Endothelial cell of umbilical vein (primary cell): ENCODE measurements at regions of chr3 and their contacts with region 1.

Region 1: DNA sequence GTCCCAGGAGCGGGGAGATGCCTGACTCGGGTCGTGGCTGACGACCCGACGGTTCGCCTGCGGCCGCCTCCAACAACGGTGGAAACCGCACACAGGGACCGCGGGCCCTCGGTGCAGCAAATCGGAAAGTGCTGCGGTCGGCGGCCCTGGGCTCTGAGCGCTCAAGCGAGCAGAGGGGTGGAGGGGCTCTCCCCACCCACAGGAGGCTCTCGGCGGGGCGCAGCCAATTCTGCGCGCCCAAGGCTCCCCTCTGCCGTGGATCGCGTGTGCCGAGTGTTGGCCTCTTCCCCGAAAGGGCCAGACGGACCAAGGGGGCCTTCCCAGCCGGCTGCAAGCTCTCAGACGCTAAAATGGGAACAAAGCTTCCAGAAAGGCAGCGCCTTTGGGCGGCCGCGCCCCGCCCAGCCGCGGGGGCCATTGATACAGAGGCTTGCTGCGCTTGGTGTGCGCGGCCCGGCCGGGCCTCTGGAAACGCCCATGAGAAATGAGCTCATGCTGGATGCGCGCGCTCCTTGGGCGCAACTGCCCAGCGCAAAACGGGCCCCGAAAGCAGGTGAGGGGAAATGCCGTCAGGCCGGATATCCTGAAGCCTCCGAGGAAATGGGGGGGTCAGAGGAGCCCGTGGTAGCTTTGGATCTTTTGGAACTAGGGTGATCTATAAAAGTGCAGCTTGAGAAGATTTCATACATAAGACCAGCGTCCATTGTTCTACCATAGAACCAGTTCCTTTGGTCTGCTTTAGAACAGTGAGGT is 1.2 kb upstream of the GSK3B start:
- DNase-seq: peak; percentile 92
- H3K4me3 ChIP-seq: peak overlapping the region; percentile 35 to 96 (median 78)
- H3K27ac ChIP-seq: peak overlapping the region; percentile 99
- H3K4me1 ChIP-seq: peaks cover 22% of the 10 kb centered on the region
- H3K27me3 ChIP-seq: no peaks in the 10 kb centered on the region
- CTCF ChIP-seq: no peak
- POLR2A ChIP-seq: peak; percentile 97

Region 2: DNA sequence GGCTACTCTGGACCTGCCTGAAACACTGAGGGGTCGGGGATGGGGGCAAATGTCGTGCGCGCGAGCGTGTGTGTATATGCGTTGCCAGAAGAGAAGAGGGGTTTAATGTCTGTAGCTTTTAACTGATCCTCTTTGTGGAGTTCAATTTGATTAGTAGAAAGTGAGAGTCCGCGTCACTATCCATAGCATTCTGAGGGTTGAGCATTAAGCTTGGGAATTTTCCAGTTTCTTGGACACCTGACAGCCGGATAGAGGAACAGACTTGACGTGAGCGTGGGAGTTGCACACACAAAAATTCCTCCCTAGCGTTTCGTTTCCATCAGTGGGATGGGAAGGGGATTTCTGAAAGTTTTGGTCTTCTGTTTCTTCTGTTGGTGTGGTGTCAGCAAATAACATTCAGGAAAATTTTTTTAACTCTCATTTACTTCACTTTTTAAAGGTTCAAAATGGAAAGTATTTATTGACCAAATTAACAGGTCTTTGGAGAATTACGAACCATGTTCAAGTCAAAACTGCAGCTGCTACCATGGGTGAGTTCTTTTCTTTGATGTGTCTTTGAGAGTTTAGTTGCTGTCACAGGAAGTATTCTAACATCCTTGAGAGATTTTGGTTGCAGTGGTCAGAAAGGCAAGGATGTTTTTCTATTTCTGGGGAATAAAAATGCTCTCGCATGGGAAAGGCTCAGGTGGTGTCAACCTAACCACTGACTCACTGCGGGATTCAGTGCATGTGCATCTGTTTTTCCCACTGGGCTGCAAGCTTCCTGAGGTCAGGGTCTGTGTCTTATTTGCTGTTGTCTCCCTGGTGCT is 625.8 kb before region 1 on chr3:
- CTCF ChIA-PET with region 1: no interaction called
- POLR2A ChIA-PET with region 1: no interaction called
- dilution Hi-C with region 1: no loop called
- intact Hi-C with region 1: loop called (anchors 1 kb)
- DNase-seq: peak; percentile 62
- H3K4me3 ChIP-seq: peak overlapping the region; percentile 78 to 86 (median 80)
- H3K27ac ChIP-seq: peak overlapping the region; percentile 19
- H3K4me1 ChIP-seq: peaks cover 13% of the 10 kb centered on the region
- H3K27me3 ChIP-seq: no peaks in the 10 kb centered on the region
- CTCF ChIP-seq: no peak
- POLR2A ChIP-seq: no peak

Region 3: GRCh38 chr3:119769394-119770149 is 325.8 kb before region 1 on chr3:
- CTCF ChIA-PET with region 1: no interaction called
- POLR2A ChIA-PET with region 1: no interaction called
- dilution Hi-C with region 1: no loop called
- intact Hi-C with region 1: loop called (anchors 1 kb)
- DNase-seq: peak; percentile 99
- H3K4me3 ChIP-seq: peak overlapping the region in 1 of 3 experiments; percentile 51
- H3K27ac ChIP-seq: peak overlapping the region; percentile 100
- H3K4me1 ChIP-seq: peaks cover 25% of the 10 kb centered on the region
- H3K27me3 ChIP-seq: no peaks in the 10 kb centered on the region
- CTCF ChIP-seq: no peak
- POLR2A ChIP-seq: peak; percentile 48

Region 4: DNA sequence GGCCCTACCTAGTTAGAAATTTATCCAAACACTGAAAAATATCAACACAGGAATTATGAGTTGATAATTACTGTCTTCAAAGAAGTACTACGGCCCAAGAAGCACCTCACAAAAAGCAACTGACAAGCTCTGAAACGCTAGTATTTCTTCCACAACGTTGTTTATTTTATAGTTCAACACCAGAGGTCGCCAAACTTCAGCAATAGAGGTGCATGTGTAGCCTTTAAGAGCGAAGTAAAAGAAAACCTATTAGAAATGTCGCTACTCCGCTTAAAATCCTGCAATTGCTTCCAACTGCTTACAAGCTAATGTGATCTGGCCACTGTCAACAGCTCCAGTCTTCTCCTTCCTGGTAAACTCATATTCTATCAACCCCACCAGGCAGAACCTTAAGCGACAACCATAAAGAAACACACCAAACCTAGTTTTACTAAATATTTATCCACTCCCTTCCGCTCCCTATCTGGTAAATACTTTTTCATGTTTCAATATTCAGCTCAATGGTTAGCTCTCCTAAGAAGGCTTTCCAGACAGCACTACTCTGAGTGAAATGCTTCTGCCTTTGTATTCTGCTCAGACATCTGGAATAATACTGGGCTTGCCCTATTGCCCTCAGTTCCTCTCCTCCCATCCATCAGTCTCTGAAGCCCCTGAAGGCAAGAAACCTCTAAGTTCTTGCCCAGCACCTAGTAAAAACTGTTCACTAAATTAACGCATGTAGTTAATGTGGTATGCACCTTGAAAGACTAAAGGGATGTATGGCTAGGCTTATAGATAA is 203.3 kb before region 1 on chr3:
- CTCF ChIA-PET with region 1: interaction called, 28 read pairs
- POLR2A ChIA-PET with region 1: interaction called, 8 read pairs
- dilution Hi-C with region 1: no loop called
- intact Hi-C with region 1: loop called (anchors 1 kb)
- DNase-seq: peak; percentile 80
- H3K4me3 ChIP-seq: no peak overlapping the region
- H3K27ac ChIP-seq: no peak overlapping the region
- H3K4me1 ChIP-seq: peaks cover 4% of the 10 kb centered on the region
- H3K27me3 ChIP-seq: no peaks in the 10 kb centered on the region
- CTCF ChIP-seq: peak; percentile 45 to 66
- POLR2A ChIP-seq: no peak

Region 5: GRCh38 chr3:120153091-120153692 is 57.8 kb after region 1 on chr3:
- CTCF ChIA-PET with region 1: interaction called, 3 read pairs
- POLR2A ChIA-PET with region 1: interaction called, 9 read pairs
- dilution Hi-C with region 1: no loop called
- intact Hi-C with region 1: loop called (anchors 2 kb)
- DNase-seq: peak; percentile 60
- H3K4me3 ChIP-seq: no peak overlapping the region
- H3K27ac ChIP-seq: peak overlapping the region; percentile 76
- H3K4me1 ChIP-seq: peaks cover 16% of the 10 kb centered on the region
- H3K27me3 ChIP-seq: no peaks in the 10 kb centered on the region
- CTCF ChIP-seq: no peak
- POLR2A ChIP-seq: no peak

Region 6: GRCh38 chr3:120198305-120198878 is 103.0 kb after region 1 on chr3:
- CTCF ChIA-PET with region 1: interaction called, 3 read pairs
- POLR2A ChIA-PET with region 1: no interaction called
- dilution Hi-C with region 1: no loop called
- intact Hi-C with region 1: loop called (anchors 5 kb)
- DNase-seq: peak; percentile 39
- H3K4me3 ChIP-seq: no peak overlapping the region
- H3K27ac ChIP-seq: no peak overlapping the region
- H3K4me1 ChIP-seq: peaks cover 8% of the 10 kb centered on the region
- H3K27me3 ChIP-seq: no peaks in the 10 kb centered on the region
- CTCF ChIP-seq: peak in 1 of 2 donors; percentile 17
- POLR2A ChIP-seq: no peak

Region 7: DNA sequence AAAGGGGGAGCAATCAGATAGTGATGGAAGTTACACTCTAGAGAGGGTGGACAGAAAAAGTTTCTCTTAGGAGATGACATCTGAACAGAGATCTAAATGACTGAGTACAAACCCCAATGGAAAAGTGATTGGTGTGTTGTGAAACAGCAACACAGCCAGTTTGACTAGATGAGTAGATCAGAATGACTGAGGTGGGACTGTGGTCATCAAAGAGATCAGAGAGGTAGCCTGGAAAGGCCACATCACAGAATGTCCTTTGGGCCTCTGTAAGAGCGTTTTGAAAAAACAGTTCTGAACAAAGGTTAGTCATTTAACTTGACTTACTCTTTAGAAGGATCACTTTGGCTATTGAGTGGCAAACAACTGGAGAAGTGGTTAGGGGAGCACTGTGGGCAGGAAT is 243.1 kb after region 1 on chr3:
- CTCF ChIA-PET with region 1: no interaction called
- POLR2A ChIA-PET with region 1: no interaction called
- dilution Hi-C with region 1: no loop called
- intact Hi-C with region 1: no loop called
- DNase-seq: no peak
- H3K4me3 ChIP-seq: no peak overlapping the region
- H3K27ac ChIP-seq: no peak overlapping the region
- H3K4me1 ChIP-seq: no peaks in the 10 kb centered on the region
- H3K27me3 ChIP-seq: no peaks in the 10 kb centered on the region
- CTCF ChIP-seq: no peak
- POLR2A ChIP-seq: no peak

Region 8: GRCh38 chr3:120417272-120417911 is 322.0 kb after region 1 on chr3:
- CTCF ChIA-PET with region 1: interaction called, 3 read pairs
- POLR2A ChIA-PET with region 1: interaction called, 6 read pairs
- dilution Hi-C with region 1: no loop called
- intact Hi-C with region 1: loop called (anchors 1 kb)
- DNase-seq: peak; percentile 100
- H3K4me3 ChIP-seq: peak overlapping the region in 2 of 3 experiments; percentile 12 to 24
- H3K27ac ChIP-seq: peak overlapping the region; percentile 75
- H3K4me1 ChIP-seq: peaks cover 29% of the 10 kb centered on the region
- H3K27me3 ChIP-seq: no peaks in the 10 kb centered on the region
- CTCF ChIP-seq: peak; percentile 79 to 96
- POLR2A ChIP-seq: no peak